Natural killer cell (primary cell): ENCODE measurements at regions of chr18 and their contacts with region 1.

Region 1: GRCh38 chr18:32092422-32093101 is 888 bp downstream of the RNF138 start:
- DNase-seq: peak; percentile 98 to 99
- ATAC-seq: peak; percentile 87 to 97 (median 88)
- H3K4me3 ChIP-seq: peak overlapping the region; percentile 97
- H3K4me3 Mint-ChIP-seq: peak overlapping the region; percentile 100
- H3K27ac ChIP-seq: peak overlapping the region; percentile 99
- H3K27ac Mint-ChIP-seq: peak overlapping the region; percentile 95 to 96
- H3K4me1 ChIP-seq: peaks cover 13% of the 10 kb centered on the region
- H3K4me1 Mint-ChIP-seq: peaks cover 42 to 43% of the 10 kb centered on the region in 2 donors
- H3K27me3 ChIP-seq: no peaks in the 10 kb centered on the region
- H3K27me3 Mint-ChIP-seq: no peaks in the 10 kb centered on the region
- CTCF ChIP-seq: no peak

Region 2: GRCh38 chr18:31546476-31546875 is 546.1 kb before region 1 on chr18:
- intact Hi-C with region 1: no loop called
- DNase-seq: no peak
- ATAC-seq: no peak
- H3K4me3 ChIP-seq: no peak overlapping the region
- H3K4me3 Mint-ChIP-seq: no peak overlapping the region
- H3K27ac ChIP-seq: no peak overlapping the region
- H3K27ac Mint-ChIP-seq: no peak overlapping the region
- H3K4me1 ChIP-seq: no peaks in the 10 kb centered on the region
- H3K4me1 Mint-ChIP-seq: no peaks in the 10 kb centered on the region
- H3K27me3 ChIP-seq: no peaks in the 10 kb centered on the region
- H3K27me3 Mint-ChIP-seq: peaks cover 0 to 6% of the 10 kb centered on the region in 2 donors
- CTCF ChIP-seq: no peak

Region 3: DNA sequence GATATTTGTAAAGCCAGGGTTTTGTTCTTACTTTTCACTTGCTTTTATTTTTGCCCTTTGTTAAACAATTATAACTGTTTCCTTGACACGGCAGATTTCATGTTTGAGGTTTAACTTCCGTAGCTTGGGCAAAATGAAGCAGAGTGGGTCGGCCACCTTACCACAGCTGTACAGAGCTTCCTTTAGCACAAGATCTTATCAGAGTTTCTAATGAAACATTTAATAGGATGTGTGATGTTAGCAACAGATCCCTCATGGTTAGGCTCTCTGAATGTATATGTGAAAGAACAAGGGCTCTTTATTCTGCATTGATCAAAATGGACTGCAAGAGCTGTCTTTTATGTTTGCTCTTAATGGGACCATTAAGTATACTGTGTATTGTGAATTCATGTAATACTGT is 51.6 kb before region 1 on chr18:
- intact Hi-C with region 1: loop called (anchors 2 kb)
- DNase-seq: peak; percentile 41 to 82
- ATAC-seq: peak; percentile 86 to 93 (median 92)
- H3K4me3 ChIP-seq: peak overlapping the region; percentile 7
- H3K4me3 Mint-ChIP-seq: peak overlapping the region; percentile 65
- H3K27ac ChIP-seq: peak overlapping the region; percentile 69
- H3K27ac Mint-ChIP-seq: peak overlapping the region; percentile 82 to 83
- H3K4me1 ChIP-seq: peaks cover 63% of the 10 kb centered on the region
- H3K4me1 Mint-ChIP-seq: peaks cover 59 to 79% of the 10 kb centered on the region in 2 donors
- H3K27me3 ChIP-seq: no peaks in the 10 kb centered on the region
- H3K27me3 Mint-ChIP-seq: no peaks in the 10 kb centered on the region
- CTCF ChIP-seq: no peak